ENCODE measurements at regions of chr10 and their contacts with region 1.

Region 1: GRCh38 chr10:91864099-91864498 is 45.2 kb downstream of the FGFBP3 start:
- DNase-seq: no peak
- ATAC-seq: no peak
- H3K4me3 ChIP-seq: no peak overlapping the region
- H3K27ac ChIP-seq: no peak overlapping the region
- H3K4me1 ChIP-seq: no peaks in the 10 kb centered on the region
- H3K27me3 ChIP-seq: no peaks in the 10 kb centered on the region
- CTCF ChIP-seq: no peak

Region 2: DNA sequence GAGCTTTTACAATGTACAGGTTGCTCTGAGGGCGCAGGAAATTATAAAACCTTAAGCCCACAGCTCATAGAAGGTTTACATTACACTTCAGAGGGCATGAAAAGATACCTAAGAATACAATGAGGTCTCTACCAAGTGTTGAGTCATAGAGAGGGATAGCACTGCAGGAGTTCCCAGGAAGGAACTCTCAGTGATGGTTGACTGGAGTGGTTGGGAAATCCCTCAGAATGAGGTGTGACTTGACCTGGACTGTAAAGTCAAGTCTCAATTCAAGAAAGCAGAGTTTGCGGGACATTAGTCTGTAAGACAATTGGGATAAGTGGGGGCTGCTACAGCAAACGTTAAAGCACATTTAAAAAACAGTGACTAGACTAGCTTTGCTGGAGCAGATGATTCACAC is 44.0 kb before region 1 on chr10:
- intact Hi-C with region 1: loop called (anchors 5 kb)
- DNase-seq: no peak
- ATAC-seq: peak; percentile 33 to 80 (median 68)
- H3K4me3 ChIP-seq: no peak overlapping the region
- H3K27ac ChIP-seq: no peak overlapping the region
- H3K4me1 ChIP-seq: no peaks in the 10 kb centered on the region
- H3K27me3 ChIP-seq: no peaks in the 10 kb centered on the region
- CTCF ChIP-seq: no peak

Region 3: DNA sequence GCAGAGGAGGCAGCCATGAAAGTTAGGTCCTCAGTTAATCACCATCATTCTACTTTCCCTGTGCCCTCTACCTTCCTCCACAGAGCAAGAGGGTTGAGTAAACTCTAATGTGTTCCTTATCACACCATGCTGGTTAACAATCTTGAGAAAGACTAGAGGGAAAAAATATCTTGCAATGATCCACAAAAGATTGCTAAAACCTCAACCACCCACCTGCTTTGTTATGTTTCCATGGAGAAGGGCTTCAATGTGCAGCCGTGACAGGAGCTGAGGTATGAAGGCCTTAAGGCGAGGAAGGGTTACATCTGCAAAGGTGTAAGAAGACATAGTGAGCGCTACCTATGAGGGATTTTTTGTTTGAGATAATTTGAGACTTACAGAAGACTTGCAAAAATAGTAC is 605.9 kb after region 1 on chr10:
- intact Hi-C with region 1: loop called in 1 of 2 experiments (anchors 10 kb)
- DNase-seq: no peak
- ATAC-seq: no peak
- H3K4me3 ChIP-seq: no peak overlapping the region
- H3K27ac ChIP-seq: no peak overlapping the region
- H3K4me1 ChIP-seq: no peaks in the 10 kb centered on the region
- H3K27me3 ChIP-seq: no peaks in the 10 kb centered on the region
- CTCF ChIP-seq: no peak

Measured in psoas muscle (tissue), 8 donors.